Heart right ventricle (tissue), 16 donors: ENCODE measurements at regions of chr3 and their contacts with region 1.

Region 1: GRCh38 chr3:62188681-62189383 is 184.5 kb downstream of the FEZF2 start:
- DNase-seq: peak; percentile 68 to 74
- ATAC-seq: peak; percentile 27 to 83 (median 72)
- H3K4me3 ChIP-seq: peak overlapping the region in 3 of 10 donors; percentile 12 to 39 (median 18)
- H3K27ac ChIP-seq: peak overlapping the region in 1 of 10 donors; percentile 10
- H3K4me1 ChIP-seq: peaks cover 0 to 27% (median 21%) of the 10 kb centered on the region in 9 donors
- H3K27me3 ChIP-seq: no peaks in the 10 kb centered on the region
- CTCF ChIP-seq: peak; percentile 60 to 88 (median 83)

Region 2: DNA sequence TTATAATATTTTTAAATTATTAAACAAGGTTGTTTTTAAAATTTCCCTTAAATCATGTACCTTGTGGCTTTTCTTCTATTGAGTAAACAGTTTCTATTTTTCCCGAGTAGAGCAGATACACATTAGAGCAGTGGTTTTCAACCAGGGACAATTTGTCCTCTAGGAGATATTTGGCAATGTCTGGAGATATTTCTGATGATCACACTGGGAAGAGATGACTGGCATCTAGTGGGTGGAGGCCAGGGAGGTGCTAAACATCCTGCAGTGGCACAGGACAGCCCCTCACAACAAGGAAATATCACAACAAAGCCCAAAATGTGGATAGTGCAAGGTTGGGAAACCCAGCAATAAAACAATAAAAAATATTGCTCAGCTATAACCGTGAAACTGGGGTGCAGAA is 740.5 kb before region 1 on chr3:
- intact Hi-C with region 1: loop called in 1 of 10 experiments (anchors 10 kb)
- DNase-seq: peak in 1 of 2 donors; percentile 6
- ATAC-seq: peak in 7 of 8 donors; percentile 38 to 94 (median 69)
- H3K4me3 ChIP-seq: no peak overlapping the region
- H3K27ac ChIP-seq: peak overlapping the region in 5 of 10 donors; percentile 11 to 48 (median 27)
- H3K4me1 ChIP-seq: peaks cover 0 to 23% (median 10%) of the 10 kb centered on the region in 9 donors
- H3K27me3 ChIP-seq: no peaks in the 10 kb centered on the region
- CTCF ChIP-seq: no peak

Region 3: DNA sequence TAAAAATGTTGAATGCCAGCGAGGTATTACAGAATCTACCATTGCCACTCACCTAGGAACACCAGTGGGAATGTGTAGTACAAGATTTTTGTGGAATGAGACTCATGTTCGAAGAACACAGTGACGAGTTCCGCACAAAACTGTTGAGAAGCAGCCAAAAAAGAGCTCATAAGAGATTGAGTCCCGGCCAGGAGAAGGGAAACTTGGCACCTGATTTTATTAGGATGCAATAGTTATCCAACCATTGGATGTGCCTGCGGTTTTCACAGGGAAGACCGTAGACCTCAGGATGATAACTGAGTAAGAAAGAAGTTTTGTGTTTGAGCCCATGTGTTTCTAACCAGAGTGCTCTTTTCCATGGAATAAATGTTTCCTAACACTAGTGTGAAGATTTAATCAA is 538.6 kb before region 1 on chr3:
- intact Hi-C with region 1: no loop called
- DNase-seq: peak in 1 of 2 donors; percentile 73
- ATAC-seq: peak in 7 of 8 donors; percentile 51 to 82 (median 65)
- H3K4me3 ChIP-seq: no peak overlapping the region
- H3K27ac ChIP-seq: peak overlapping the region in 1 of 10 donors; percentile 19
- H3K4me1 ChIP-seq: peaks cover 8 to 72% (median 45%) of the 10 kb centered on the region in 9 donors
- H3K27me3 ChIP-seq: no peaks in the 10 kb centered on the region
- CTCF ChIP-seq: no peak

Region 4: DNA sequence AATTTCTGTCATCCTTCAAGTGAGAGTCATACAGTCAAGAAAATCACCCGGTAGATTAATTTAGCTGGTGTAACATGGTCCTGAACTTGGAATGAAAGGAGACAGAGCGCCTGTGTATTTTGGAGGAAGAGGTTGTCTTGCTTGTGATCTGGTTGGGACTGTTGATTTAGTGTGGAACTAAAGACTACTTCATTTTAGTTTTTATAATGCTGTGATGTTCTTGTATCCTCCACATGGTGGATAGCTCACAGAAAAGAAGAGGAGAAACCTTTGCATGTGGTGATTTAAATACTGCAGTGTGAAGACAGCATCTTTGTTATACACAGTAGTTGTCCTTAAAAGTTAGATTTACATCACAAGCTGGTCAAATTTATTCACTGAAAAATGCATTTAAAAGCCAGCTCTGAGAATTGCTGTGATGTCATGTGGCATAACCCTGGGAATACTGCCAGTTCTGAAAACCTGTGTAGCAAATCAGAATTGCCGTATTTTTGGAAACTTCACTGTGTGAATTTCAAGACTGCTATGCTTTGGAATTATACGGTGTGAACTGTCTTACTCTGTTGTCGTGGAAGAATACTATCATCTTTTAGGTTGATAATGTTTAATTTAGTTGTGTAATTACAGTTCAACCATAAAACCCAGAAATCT is 359.0 kb before region 1 on chr3:
- intact Hi-C with region 1: no loop called
- DNase-seq: no peak
- ATAC-seq: peak in 7 of 8 donors; percentile 4 to 30 (median 26)
- H3K4me3 ChIP-seq: no peak overlapping the region
- H3K27ac ChIP-seq: peak overlapping the region; percentile 3 to 77 (median 49)
- H3K4me1 ChIP-seq: peaks cover 12 to 74% (median 50%) of the 10 kb centered on the region in 9 donors
- H3K27me3 ChIP-seq: no peaks in the 10 kb centered on the region
- CTCF ChIP-seq: no peak

Region 5: DNA sequence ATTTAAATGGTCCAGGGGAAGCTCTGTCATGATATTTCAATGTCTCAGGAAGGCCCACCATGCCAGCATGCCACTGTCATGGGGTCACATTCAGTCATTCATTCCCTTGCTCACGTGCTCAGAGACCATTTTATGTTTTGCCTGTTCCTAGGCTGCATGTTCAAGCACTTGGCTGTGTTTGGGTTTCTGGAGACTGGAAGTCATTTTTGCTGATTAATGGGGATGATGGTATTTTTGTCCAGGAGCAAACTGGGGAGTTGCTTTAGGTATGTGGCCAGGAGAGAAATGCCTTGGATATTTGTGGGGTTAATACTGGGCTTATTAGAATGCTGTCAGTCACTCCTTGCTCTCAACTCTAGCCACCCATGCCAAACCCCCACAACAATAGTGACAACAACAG is 323.9 kb before region 1 on chr3:
- intact Hi-C with region 1: loop called in 2 of 10 experiments (anchors 5 to 10 kb)
- DNase-seq: no peak
- ATAC-seq: no peak
- H3K4me3 ChIP-seq: no peak overlapping the region
- H3K27ac ChIP-seq: no peak overlapping the region
- H3K4me1 ChIP-seq: peaks cover 11 to 67% (median 38%) of the 10 kb centered on the region in 9 donors
- H3K27me3 ChIP-seq: no peaks in the 10 kb centered on the region
- CTCF ChIP-seq: no peak

Region 6: DNA sequence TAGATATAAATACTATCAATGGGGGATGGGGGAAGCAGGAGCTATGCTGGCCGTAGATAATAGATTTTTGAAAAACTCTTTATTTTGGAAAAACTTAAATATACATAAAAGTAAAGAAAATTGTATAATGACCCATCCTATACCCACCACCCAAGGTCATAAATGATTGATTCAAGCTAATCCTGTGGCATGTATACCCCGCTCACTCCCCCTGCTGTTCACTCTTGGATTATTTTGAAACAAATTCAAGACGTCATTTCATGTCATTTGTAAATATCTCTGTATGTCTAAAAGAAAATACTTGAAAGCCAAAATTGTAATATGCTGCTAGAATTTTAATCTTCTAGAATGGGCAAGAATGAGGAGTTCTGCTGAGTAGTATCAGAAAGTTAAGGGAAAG is 57.2 kb before region 1 on chr3:
- intact Hi-C with region 1: loop called in 4 of 10 experiments (anchors 5 kb)
- DNase-seq: no peak
- ATAC-seq: no peak
- H3K4me3 ChIP-seq: no peak overlapping the region
- H3K27ac ChIP-seq: no peak overlapping the region
- H3K4me1 ChIP-seq: peaks cover 10 to 46% (median 33%) of the 10 kb centered on the region in 9 donors
- H3K27me3 ChIP-seq: no peaks in the 10 kb centered on the region
- CTCF ChIP-seq: peak in 7 of 9 donors; percentile 20 to 63 (median 49)